ENCODE measurements at regions of chr7 and their contacts with region 1.

Region 1: DNA sequence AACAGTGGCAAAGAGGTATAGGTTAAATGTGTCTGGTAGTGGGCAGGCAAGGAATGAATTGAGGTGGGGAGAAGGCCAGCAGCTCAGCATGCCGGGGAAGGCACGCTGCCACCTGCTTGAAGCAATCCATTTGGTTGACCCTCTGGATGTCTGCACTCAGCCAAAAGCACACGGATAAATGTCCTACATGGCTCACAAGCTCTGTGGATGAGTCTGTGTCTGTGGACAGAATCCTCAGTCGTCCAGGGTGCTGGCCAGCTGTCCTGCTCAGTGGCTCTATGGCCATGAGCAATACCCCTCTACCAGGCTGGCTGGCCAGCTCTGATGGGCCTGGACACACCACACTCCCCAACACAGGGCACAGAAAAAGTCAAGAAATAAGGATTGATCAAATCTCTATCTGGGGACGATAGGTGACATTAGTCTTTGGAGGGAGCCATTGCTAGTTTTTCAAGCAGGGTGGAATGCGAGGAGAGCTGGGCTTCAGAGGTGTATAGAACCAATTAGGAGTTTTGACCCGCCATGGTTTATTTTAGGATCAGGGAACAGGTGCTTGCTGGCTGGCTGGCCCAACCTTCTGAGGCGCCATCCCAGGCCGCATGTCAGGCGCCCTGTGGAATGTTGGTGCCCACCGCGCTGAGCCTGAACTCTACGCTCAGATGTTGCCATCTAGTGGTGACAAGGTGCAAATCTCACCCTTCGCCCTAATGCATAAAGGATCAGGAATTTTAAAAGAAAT is 493.4 kb downstream of the TNS3 start:
- DNase-seq: peak; percentile 46 to 61
- H3K4me3 ChIP-seq: no peak overlapping the region
- H3K4me3 Mint-ChIP-seq: no peak overlapping the region
- H3K27ac Mint-ChIP-seq: no peak overlapping the region
- H3K4me1 ChIP-seq: no peaks in the 10 kb centered on the region
- H3K4me1 Mint-ChIP-seq: no peaks in the 10 kb centered on the region
- H3K27me3 ChIP-seq: no peaks in the 10 kb centered on the region
- H3K27me3 Mint-ChIP-seq: no peaks in the 10 kb centered on the region
- CTCF ChIP-seq: peak; percentile 81 to 82

Region 2: GRCh38 chr7:45917658-45918057 is 1170.8 kb before region 1 on chr7:
- CTCF ChIA-PET with region 1: no interaction called
- POLR2A ChIA-PET with region 1: no interaction called
- intact Hi-C with region 1: loop called (anchors 1 kb)
- DNase-seq: peak; percentile 62 to 84
- H3K4me3 ChIP-seq: no peak overlapping the region
- H3K4me3 Mint-ChIP-seq: no peak overlapping the region
- H3K27ac Mint-ChIP-seq: no peak overlapping the region
- H3K4me1 ChIP-seq: peaks cover 5% of the 10 kb centered on the region; the same call in 1 of the 2 replicates
- H3K4me1 Mint-ChIP-seq: no peaks in the 10 kb centered on the region
- H3K27me3 ChIP-seq: no peaks in the 10 kb centered on the region; the same call in none of the 2 replicates
- H3K27me3 Mint-ChIP-seq: peaks cover 23% of the 10 kb centered on the region
- CTCF ChIP-seq: peak; percentile 96

Region 3: DNA sequence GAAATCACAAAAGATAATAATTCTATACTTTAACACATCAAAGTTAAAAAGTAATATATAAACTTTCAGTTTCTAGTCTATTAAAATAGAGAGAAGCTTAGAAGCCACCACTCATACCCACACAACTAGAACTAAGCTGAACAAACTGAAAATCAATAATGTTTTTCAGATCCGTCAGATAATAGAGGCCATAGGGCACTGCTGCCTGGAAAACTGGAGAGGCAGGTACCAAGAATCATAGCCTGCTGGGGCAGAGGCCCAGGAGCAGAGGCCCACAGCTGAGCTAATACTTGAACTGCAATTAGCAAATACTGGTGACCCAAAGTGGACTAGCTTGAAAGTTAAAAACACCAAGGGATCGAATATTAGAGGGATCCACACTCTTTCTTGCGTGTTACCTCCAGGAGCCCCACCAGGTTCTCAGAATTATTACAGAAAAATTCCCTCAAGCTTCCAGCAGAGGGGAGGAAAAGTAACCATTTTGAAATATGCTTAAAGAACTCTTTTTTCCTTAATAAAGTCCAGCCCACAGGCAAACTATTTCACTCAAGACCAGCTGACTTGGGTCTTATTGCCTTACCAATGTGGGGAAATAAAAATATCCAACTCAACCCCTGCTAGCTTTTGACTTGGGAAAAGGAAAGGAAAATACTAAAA is 393.3 kb before region 1 on chr7:
- CTCF ChIA-PET with region 1: no interaction called
- POLR2A ChIA-PET with region 1: no interaction called
- intact Hi-C with region 1: loop called (anchors 5 kb)
- DNase-seq: no peak
- H3K4me3 ChIP-seq: no peak overlapping the region
- H3K4me3 Mint-ChIP-seq: no peak overlapping the region
- H3K27ac Mint-ChIP-seq: no peak overlapping the region
- H3K4me1 ChIP-seq: no peaks in the 10 kb centered on the region
- H3K4me1 Mint-ChIP-seq: no peaks in the 10 kb centered on the region
- H3K27me3 ChIP-seq: no peaks in the 10 kb centered on the region
- H3K27me3 Mint-ChIP-seq: no peaks in the 10 kb centered on the region
- CTCF ChIP-seq: peak in 1 of 2 experiments; percentile 6

Region 4: DNA sequence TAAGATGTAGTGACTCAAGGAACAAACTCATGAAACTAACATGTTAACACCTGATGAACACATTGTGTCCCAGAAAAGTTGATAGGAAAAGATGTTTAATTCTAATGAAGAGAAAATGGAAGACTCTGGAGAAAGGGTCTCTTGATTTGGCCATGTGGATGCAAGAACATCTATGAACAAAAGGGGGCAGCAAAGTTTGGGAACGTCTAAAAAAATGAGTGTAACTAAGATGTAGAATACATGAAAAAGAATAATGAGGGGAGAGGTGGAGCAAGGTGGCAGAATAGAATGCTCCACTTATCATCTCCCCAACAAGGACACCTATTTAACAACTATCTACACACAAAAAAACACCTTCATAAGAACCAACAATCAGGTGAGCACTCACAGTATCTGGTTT is 311.7 kb before region 1 on chr7:
- CTCF ChIA-PET with region 1: no interaction called
- POLR2A ChIA-PET with region 1: no interaction called
- intact Hi-C with region 1: loop called (anchors 1 kb)
- DNase-seq: no peak
- H3K4me3 ChIP-seq: no peak overlapping the region
- H3K4me3 Mint-ChIP-seq: no peak overlapping the region
- H3K27ac Mint-ChIP-seq: no peak overlapping the region
- H3K4me1 ChIP-seq: no peaks in the 10 kb centered on the region
- H3K4me1 Mint-ChIP-seq: no peaks in the 10 kb centered on the region
- H3K27me3 ChIP-seq: no peaks in the 10 kb centered on the region
- H3K27me3 Mint-ChIP-seq: peaks cover 7% of the 10 kb centered on the region
- CTCF ChIP-seq: peak; percentile 36 to 40